CD8-positive, alpha-beta memory T cell (primary cell): ENCODE measurements at regions of chr17 and their contacts with region 1.

Region 1: DNA sequence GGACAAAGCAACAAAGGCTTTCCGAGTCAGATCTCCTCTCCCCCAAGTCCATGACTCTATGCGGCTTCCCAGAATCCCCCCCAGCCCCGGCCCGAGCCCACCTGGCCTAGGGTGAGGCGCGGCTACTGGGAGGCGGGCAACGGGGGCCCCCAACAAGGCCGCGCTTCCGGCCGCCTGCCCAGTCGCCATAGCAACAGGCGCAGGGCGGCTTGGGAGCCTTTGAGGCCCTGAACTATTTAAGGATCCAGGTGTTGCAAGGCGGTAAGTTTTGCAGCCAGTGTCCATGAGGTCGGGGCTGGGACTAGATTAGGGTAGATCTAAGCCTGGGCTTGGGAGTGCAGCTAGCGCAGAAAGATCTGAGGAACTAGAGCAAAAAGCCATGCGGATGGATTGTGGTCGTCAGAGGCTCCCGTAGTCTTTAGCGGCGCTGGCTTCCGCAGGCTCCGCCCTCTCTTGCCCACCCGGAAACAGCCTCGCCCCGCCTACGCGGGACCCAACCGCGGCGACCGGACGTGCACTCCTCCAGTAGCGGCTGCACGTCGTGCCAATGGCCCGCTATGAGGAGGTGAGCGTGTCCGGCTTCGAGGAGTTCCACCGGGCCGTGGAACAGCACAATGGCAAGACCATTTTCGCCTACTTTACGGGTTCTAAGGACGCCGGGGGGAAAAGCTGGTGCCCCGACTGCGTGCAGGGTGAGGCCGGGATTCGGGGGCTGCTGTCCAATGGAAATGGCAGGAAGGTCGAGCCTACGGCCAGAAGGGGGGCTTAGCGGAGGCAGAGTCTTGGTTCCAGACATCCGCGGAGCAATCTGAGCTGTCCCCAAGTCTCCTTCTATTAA is at the starts of genes KIAA0753 and TXNDC17:
- DNase-seq: peak; percentile 84 to 93 (median 89)
- H3K4me3 ChIP-seq: peak within 1 kb of the TSS; percentile 66
- H3K4me3 Mint-ChIP-seq: peak within 1 kb of the TSS; percentile 93 to 96 (median 95)
- H3K27ac ChIP-seq: peak within 1 kb of the TSS; percentile 82
- H3K27ac Mint-ChIP-seq: peak within 1 kb of the TSS; percentile 95 to 99 (median 98)
- H3K4me1 ChIP-seq: peaks cover 25% of the 10 kb centered on the region
- H3K4me1 Mint-ChIP-seq: peaks cover 39 to 65% (median 54%) of the 10 kb centered on the region in 3 donors
- H3K27me3 ChIP-seq: no peaks in the 10 kb centered on the region
- H3K27me3 Mint-ChIP-seq: peaks cover 0 to 3% of the 10 kb centered on the region in 2 donors
- total RNA-seq, gene KIAA0753: 18.6 to 20.8 TPM
- total RNA-seq, gene TXNDC17: 105 to 110 TPM

Region 2: DNA sequence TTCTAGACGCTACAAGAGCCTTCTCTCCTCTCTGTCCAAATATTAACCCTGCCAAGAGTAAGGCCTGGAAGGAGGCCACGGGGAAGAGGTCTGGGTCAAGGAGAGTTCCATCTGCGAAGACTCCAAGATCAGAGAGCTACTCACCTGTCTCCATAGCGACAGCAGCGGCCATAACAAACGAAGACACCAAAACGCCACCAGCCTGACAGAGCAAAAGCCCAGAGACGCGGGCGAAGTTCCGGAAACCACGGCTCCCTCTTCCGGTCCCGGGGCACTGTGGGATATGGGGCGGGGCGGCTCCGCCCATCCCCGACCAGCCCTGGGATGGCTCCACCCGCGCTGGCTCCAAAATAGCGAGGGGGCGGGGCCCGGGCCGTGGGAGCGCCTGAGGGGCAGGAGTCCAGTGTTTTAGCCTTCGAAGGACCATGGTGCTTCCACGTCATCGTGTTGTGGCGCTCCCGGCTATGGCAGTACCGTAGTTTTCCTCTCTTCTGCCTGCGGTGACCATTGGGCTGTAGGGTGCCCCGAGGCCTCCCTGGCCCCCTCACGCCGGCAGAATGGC is 10.7 kb after region 1 on chr17 and contains the starts of genes C17orf100 and MED31:
- CTCF ChIA-PET with region 1: interaction called, 7 read pairs
- POLR2A ChIA-PET with region 1: interaction called, 11 read pairs
- DNase-seq: peak; percentile 90 to 95 (median 93)
- H3K4me3 ChIP-seq: peak within 1 kb of the TSS; percentile 92
- H3K4me3 Mint-ChIP-seq: peak within 1 kb of the TSS; percentile 94 to 99 (median 97)
- H3K27ac ChIP-seq: peak within 1 kb of the TSS; percentile 100
- H3K27ac Mint-ChIP-seq: peak within 1 kb of the TSS; percentile 98 to 100 (median 100)
- H3K4me1 ChIP-seq: peaks cover 45% of the 10 kb centered on the region
- H3K4me1 Mint-ChIP-seq: peaks cover 51 to 84% (median 73%) of the 10 kb centered on the region in 3 donors
- H3K27me3 ChIP-seq: no peaks in the 10 kb centered on the region
- H3K27me3 Mint-ChIP-seq: peaks cover 3 to 5% of the 10 kb centered on the region in 2 donors
- total RNA-seq, gene C17orf100: 2.0 to 2.1 TPM
- total RNA-seq, gene MED31: 24.8 to 29.5 TPM

Region 3: GRCh38 chr17:6701719-6702118 is 61.0 kb after region 1 on chr17:
- CTCF ChIA-PET with region 1: no interaction called
- POLR2A ChIA-PET with region 1: no interaction called
- DNase-seq: peak in 1 of 5 donors; percentile 19
- H3K4me3 ChIP-seq: no peak overlapping the region
- H3K4me3 Mint-ChIP-seq: no peak overlapping the region
- H3K27ac ChIP-seq: no peak overlapping the region
- H3K27ac Mint-ChIP-seq: no peak overlapping the region
- H3K4me1 ChIP-seq: no peaks in the 10 kb centered on the region
- H3K4me1 Mint-ChIP-seq: peaks cover 0 to 5% (median 0%) of the 10 kb centered on the region in 3 donors
- H3K27me3 ChIP-seq: no peaks in the 10 kb centered on the region
- H3K27me3 Mint-ChIP-seq: peaks cover 1 to 18% of the 10 kb centered on the region in 2 donors